Psoas muscle (tissue), 8 donors: ENCODE measurements at regions of chr18 and their contacts with region 1.

Region 1: GRCh38 chr18:44687421-44687820 is 6.7 kb downstream of the SETBP1 start:
- DNase-seq: no peak
- ATAC-seq: no peak
- H3K4me3 ChIP-seq: no peak overlapping the region
- H3K27ac ChIP-seq: no peak overlapping the region
- H3K4me1 ChIP-seq: peaks cover 63% of the 10 kb centered on the region
- H3K27me3 ChIP-seq: no peaks in the 10 kb centered on the region
- CTCF ChIP-seq: no peak

Region 2: DNA sequence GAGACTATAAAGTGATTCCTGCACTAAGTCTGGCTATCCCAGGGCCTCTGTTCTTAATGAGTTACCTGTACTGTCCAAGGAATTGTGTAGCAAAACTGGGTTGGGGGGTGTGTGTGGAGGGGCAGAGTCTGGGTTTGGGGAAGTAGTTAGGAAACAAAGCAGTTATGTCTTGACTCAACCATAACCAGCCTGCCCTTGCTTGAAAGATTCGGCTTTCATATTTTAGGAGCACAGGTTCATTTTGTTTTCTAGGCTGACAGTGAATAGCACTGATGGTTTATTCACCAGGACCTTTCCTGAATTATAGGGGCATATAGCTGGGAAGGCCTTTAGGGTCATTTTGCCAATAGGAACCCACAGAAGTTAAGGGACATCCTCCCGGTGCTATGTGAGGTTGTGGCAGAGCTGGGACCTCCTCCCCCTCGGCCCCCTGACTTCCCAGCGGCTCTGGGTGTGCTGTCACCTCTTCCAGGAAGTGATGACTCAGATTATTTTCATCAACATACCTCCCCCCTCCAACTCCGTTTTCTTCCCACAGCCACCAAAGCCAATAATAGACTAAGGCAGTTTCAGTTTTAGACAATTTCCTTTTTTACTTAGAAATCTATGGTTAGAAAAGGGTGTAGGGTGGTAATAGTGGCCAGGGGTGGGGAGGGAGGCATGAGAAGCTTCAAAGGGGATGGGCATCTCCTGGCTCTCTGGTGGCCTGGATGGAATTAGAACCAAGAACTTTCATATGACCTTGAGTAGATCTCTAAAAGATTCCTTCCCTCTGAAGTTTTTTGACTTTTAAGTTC is 38.1 kb after region 1 on chr18:
- intact Hi-C with region 1: loop called in 1 of 2 experiments (anchors 5 kb)
- DNase-seq: peak; percentile 54 to 73
- ATAC-seq: peak; percentile 74 to 86 (median 78)
- H3K4me3 ChIP-seq: no peak overlapping the region
- H3K27ac ChIP-seq: peak overlapping the region; percentile 50
- H3K4me1 ChIP-seq: peaks cover 41% of the 10 kb centered on the region
- H3K27me3 ChIP-seq: no peaks in the 10 kb centered on the region
- CTCF ChIP-seq: no peak